ENCODE measurements at regions of chr7 and their contacts with region 1.

Region 1: DNA sequence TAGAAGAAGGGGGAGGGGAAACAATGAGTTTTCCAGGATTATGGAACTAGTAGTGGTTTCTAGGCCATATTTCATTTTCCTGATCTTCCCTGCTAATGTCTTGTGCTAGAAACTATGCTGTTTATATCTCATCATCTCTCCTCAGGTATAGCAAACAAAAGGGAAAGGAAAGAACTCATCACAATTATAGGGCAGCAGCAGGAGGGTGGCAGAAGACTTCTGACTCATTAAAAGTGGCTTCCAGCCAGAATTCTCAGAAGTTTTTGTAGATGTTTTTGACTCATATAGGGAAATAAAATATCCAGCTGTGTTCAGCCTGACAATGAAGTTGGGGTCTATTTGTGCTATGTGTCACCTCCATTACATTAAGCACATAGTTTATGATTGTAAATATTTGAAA is 6.5 kb downstream of the AHR start:
- DNase-seq: no peak
- H3K4me3 Mint-ChIP-seq: peak overlapping the region; percentile 45
- H3K27ac Mint-ChIP-seq: peak overlapping the region; percentile 59
- H3K4me1 Mint-ChIP-seq: peaks cover 29% of the 10 kb centered on the region
- H3K27me3 Mint-ChIP-seq: no peaks in the 10 kb centered on the region

Region 2: GRCh38 chr7:16801111-16801542 is 503.8 kb before region 1 on chr7:
- intact Hi-C with region 1: no loop called
- DNase-seq: no peak
- H3K4me3 Mint-ChIP-seq: no peak overlapping the region
- H3K27ac Mint-ChIP-seq: no peak overlapping the region
- H3K4me1 Mint-ChIP-seq: no peaks in the 10 kb centered on the region
- H3K27me3 Mint-ChIP-seq: peaks cover 9% of the 10 kb centered on the region

Region 3: GRCh38 chr7:16999541-17000267 is 305.2 kb before region 1 on chr7:
- intact Hi-C with region 1: loop called (anchors 2 kb)
- DNase-seq: peak; percentile 15
- H3K4me3 Mint-ChIP-seq: peak overlapping the region; percentile 53
- H3K27ac Mint-ChIP-seq: peak overlapping the region; percentile 77
- H3K4me1 Mint-ChIP-seq: peaks cover 33% of the 10 kb centered on the region
- H3K27me3 Mint-ChIP-seq: peaks cover 2% of the 10 kb centered on the region